Naive thymus-derived CD4-positive, alpha-beta T cell (primary cell): ENCODE measurements at regions of chr15 and their contacts with region 1.

Region 1: DNA sequence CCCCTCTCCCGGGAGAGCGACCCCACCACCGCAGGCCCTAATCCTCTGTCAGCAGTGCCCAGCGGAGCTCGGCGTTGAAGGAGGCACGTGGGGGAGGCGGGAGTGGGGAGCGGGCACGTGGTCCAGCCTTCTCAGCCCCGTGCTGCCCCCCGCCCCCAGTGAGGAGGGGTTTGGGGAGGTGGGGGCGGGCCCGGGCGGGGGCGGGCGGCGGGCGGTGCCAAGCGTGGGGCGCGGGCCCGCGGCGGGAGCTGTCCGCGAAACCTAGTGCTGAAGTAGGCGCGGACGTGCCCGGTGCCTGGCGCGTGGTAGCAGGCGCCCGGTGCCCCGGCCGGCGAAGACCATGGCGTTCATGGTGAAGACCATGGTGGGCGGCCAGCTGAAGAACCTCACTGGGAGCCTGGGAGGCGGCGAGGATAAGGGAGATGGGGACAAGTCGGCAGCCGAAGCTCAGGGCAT is at the start of gene CPLX3:
- DNase-seq: peak; percentile 20 to 76 (median 47)
- ATAC-seq: peak; percentile 83
- H3K4me3 ChIP-seq: no peak within 1 kb of the TSS
- H3K4me3 Mint-ChIP-seq: no peak within 1 kb of the TSS
- H3K27ac ChIP-seq: no peak within 1 kb of the TSS
- H3K27ac Mint-ChIP-seq: peak within 1 kb of the TSS in 1 of 9 donors; percentile 36
- H3K4me1 ChIP-seq: no peaks in the 10 kb centered on the region
- H3K4me1 Mint-ChIP-seq: peaks cover 0 to 6% (median 0%) of the 10 kb centered on the region in 7 donors
- H3K27me3 ChIP-seq: peaks cover 0 to 12% of the 10 kb centered on the region in 2 donors
- H3K27me3 Mint-ChIP-seq: peaks cover 21 to 35% (median 24%) of the 10 kb centered on the region in 5 donors
- total RNA-seq, gene CPLX3: 0.27 to 0.60 TPM in 2 of 5 experiments, not detected in the others

Region 2: GRCh38 chr15:74873036-74873755 is 46.8 kb after region 1 on chr15 and contains the start of gene SCAMP2:
- CTCF ChIA-PET with region 1: no interaction called
- POLR2A ChIA-PET with region 1: no interaction called
- intact Hi-C with region 1: loop called in 1 of 2 experiments (anchors 1 kb)
- DNase-seq: peak; percentile 83 to 94 (median 91)
- ATAC-seq: peak; percentile 95
- H3K4me3 ChIP-seq: peak within 1 kb of the TSS; percentile 86
- H3K4me3 Mint-ChIP-seq: peak within 1 kb of the TSS; percentile 92 to 100 (median 98)
- H3K27ac ChIP-seq: peak within 1 kb of the TSS; percentile 98
- H3K27ac Mint-ChIP-seq: peak within 1 kb of the TSS; percentile 88 to 99 (median 96)
- H3K4me1 ChIP-seq: peaks cover 38 to 39% of the 10 kb centered on the region in 2 donors
- H3K4me1 Mint-ChIP-seq: peaks cover 31 to 54% (median 45%) of the 10 kb centered on the region in 7 donors
- H3K27me3 ChIP-seq: no peaks in the 10 kb centered on the region
- H3K27me3 Mint-ChIP-seq: peaks cover 0 to 8% (median 0%) of the 10 kb centered on the region in 5 donors
- total RNA-seq, gene SCAMP2: 78.9 to 130 (median 116) TPM

Region 3: GRCh38 chr15:74906446-74907162 is 80.2 kb after region 1 on chr15 and contains the start of gene FAM219B:
- CTCF ChIA-PET with region 1: no interaction called
- POLR2A ChIA-PET with region 1: no interaction called
- intact Hi-C with region 1: no loop called
- DNase-seq: peak; percentile 44 to 86 (median 61)
- ATAC-seq: peak; percentile 93
- H3K4me3 ChIP-seq: peak within 1 kb of the TSS; percentile 72
- H3K4me3 Mint-ChIP-seq: peak within 1 kb of the TSS; percentile 93 to 99 (median 98)
- H3K27ac ChIP-seq: peak within 1 kb of the TSS; percentile 85
- H3K27ac Mint-ChIP-seq: peak within 1 kb of the TSS; percentile 90 to 98 (median 95)
- H3K4me1 ChIP-seq: peaks cover 17 to 20% of the 10 kb centered on the region in 2 donors
- H3K4me1 Mint-ChIP-seq: peaks cover 28 to 54% (median 42%) of the 10 kb centered on the region in 7 donors
- H3K27me3 ChIP-seq: no peaks in the 10 kb centered on the region
- H3K27me3 Mint-ChIP-seq: no peaks in the 10 kb centered on the region
- total RNA-seq, gene FAM219B: 40.5 to 111 (median 99.6) TPM

Region 4: GRCh38 chr15:74995241-74995778 is 168.9 kb after region 1 on chr15 and contains the start of gene SCAMP5:
- CTCF ChIA-PET with region 1: no interaction called
- POLR2A ChIA-PET with region 1: interaction called, 3 read pairs
- intact Hi-C with region 1: loop called in 1 of 2 experiments (anchors 1 kb)
- DNase-seq: peak; percentile 81 to 95 (median 91)
- ATAC-seq: peak; percentile 99
- H3K4me3 ChIP-seq: peak within 1 kb of the TSS; percentile 75
- H3K4me3 Mint-ChIP-seq: peak within 1 kb of the TSS; percentile 73 to 97 (median 82)
- H3K27ac ChIP-seq: no peak within 1 kb of the TSS
- H3K27ac Mint-ChIP-seq: peak within 1 kb of the TSS in 4 of 9 donors; percentile 10 to 75 (median 26)
- H3K4me1 ChIP-seq: peaks cover 8 to 9% of the 10 kb centered on the region in 2 donors
- H3K4me1 Mint-ChIP-seq: peaks cover 8 to 20% (median 15%) of the 10 kb centered on the region in 7 donors
- H3K27me3 ChIP-seq: no peaks in the 10 kb centered on the region
- H3K27me3 Mint-ChIP-seq: peaks cover 10 to 37% (median 27%) of the 10 kb centered on the region in 5 donors
- total RNA-seq, gene SCAMP5: 0.35 to 9.5 (median 0.87) TPM